GM10248 (cell line): ENCODE measurements at regions of chr6 and their contacts with region 1.

Region 1: GRCh38 chr6:227074-227782 is 65.1 kb upstream of the DUSP22 start:
- DNase-seq: peak; percentile 65
- CTCF ChIP-seq: peak; percentile 42

Region 2: DNA sequence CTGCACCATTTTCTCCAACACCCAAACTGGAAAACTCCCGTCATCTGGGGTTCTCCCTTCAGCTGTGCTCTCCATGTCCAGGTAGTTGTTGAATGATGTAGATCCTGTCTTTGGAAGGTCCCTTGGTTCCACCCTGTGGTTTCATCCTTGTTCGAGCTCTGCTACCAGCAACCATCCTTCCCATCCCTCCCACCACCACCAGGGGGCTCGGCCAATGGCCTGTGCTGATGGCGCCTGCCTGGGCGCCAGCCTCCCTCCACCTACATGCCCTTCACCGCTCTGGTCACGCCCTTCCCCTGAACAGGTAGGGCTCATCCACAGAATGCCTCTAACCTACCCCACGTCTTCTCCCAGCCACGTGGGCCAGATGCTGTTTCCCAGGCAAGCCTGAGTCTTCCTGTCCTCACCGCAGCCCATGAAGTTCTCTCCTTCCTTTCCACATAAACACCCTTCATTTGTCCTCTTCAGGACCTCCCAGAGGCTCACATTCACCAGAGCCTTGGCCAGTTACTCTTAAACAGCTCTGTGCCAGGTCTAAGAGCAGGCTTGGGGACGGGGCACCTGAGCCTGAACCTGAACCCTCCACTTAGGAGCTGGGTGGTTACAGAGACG is 10.1 kb before region 1 on chr6:
- CTCF ChIA-PET with region 1: interaction called, 620 read pairs
- POLR2A ChIA-PET with region 1: interaction called, 39 read pairs
- DNase-seq: no peak
- CTCF ChIP-seq: peak; percentile 50

Region 3: GRCh38 chr6:259901-260508 is 32.8 kb after region 1 on chr6:
- CTCF ChIA-PET with region 1: interaction called, 27 read pairs
- POLR2A ChIA-PET with region 1: no interaction called
- DNase-seq: peak; percentile 77
- CTCF ChIP-seq: no peak

Region 4: GRCh38 chr6:291697-292505 is 64.7 kb after region 1 on chr6 and contains the start of gene DUSP22:
- CTCF ChIA-PET with region 1: interaction called, 12 read pairs
- POLR2A ChIA-PET with region 1: interaction called, 5 read pairs
- DNase-seq: peak; percentile 100
- CTCF ChIP-seq: no peak

Region 5: GRCh38 chr6:313087-313486 is 85.9 kb after region 1 on chr6:
- CTCF ChIA-PET with region 1: interaction called, 23 read pairs
- POLR2A ChIA-PET with region 1: interaction called, 3 read pairs
- DNase-seq: no peak
- CTCF ChIP-seq: no peak

Region 6: DNA sequence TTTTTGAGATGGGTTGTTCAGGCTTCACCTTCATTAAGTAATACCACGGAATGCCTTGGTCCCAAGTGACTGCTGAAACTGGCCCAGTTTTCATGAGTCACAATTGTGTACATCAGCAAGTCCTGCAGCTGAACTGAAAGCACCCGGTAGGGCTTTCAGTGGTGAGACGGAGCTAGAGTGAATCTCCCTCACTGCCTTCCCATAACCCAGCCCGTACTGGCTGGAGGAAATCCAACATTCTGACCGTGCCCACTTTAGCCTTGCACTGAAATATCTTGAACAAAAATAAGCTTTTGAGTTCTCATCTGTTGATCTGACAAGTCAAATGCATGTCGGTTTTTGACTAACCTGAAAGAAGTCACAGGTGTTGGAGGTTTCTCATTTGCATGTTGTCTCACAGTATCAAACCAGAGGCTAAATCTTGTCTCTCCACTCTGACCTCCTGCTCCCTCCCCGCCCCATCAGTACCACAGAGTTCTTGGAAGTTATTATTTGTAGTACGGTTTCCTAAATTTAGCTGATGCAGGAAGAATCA is 101.0 kb after region 1 on chr6:
- CTCF ChIA-PET with region 1: interaction called, 28 read pairs
- POLR2A ChIA-PET with region 1: interaction called, 3 read pairs
- DNase-seq: peak; percentile 84
- CTCF ChIP-seq: no peak

Region 7: DNA sequence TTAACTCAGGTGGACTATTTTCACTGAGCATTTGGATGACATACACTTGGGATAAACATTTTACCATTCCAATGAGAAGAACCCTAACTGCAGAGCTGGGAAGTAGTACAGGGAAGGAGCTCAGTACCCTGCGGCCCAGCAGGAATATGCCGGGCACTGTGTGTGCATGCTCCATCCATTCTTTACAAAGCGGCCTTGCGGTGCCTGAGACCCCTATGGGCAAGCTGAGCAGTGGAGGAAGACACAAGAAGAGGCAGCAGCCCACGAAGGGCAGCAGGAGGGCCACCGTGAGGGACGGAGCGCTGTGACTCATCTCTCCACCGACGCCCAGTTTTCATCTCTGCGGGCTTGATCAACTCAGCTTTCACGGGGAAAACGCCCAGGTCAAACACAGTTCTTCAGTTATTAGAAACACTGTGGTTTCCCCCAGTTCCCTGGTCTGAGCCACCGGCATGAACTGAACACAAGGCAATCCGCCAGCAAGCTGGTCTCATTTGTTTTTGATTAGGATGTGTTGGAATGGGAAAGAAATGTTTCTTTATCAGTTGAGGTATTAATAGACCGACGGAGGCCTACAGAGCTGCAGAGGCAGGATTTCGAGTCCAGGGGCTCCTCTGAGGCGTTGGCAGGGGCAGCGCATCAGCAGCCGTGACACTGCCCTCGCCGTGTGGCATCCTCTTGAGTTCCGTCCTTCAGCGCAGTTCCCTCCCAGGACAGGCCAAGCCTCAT is 209.2 kb after region 1 on chr6:
- CTCF ChIA-PET with region 1: no interaction called
- POLR2A ChIA-PET with region 1: no interaction called
- DNase-seq: no peak
- CTCF ChIP-seq: no peak

Region 8: DNA sequence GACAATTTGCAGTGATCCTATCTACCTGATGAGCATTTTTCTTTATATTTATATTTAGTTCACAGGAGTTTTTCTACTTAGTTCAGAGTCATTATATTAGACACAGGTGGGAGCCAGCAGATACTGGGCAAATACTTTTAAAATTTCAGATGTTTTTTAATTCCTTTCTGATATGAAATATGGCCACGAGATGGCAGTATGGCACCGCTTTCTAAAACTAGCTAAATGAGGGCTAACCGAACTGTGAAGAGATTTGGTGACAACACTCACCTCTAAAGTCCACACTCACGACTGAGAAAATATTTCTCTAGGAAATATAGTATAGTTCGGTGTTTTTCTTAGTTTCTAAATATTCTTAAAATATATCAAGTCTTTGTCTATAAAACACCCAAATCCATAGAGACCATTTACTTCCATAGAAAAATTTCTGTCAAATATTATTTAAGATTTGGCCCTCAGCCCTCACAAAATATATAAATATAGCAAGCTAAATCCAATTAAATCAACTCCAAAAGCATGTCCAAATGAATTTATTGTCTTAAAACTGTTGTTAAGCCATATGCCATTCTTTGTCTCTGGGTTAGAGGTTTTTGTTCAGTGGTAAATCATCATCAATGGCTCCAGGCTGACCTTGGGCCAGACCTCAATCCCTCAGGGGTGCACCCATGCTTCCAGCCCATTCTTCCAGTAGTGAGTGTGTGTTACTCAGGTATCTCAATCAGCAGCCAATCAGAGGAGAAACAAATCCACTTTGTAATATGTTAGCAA is 366.1 kb after region 1 on chr6:
- CTCF ChIA-PET with region 1: no interaction called
- POLR2A ChIA-PET with region 1: no interaction called
- DNase-seq: peak; percentile 67
- CTCF ChIP-seq: peak; percentile 42